Body of pancreas (tissue), 4 donors: ENCODE measurements at regions of chr14 and their contacts with region 1.

Region 1: DNA sequence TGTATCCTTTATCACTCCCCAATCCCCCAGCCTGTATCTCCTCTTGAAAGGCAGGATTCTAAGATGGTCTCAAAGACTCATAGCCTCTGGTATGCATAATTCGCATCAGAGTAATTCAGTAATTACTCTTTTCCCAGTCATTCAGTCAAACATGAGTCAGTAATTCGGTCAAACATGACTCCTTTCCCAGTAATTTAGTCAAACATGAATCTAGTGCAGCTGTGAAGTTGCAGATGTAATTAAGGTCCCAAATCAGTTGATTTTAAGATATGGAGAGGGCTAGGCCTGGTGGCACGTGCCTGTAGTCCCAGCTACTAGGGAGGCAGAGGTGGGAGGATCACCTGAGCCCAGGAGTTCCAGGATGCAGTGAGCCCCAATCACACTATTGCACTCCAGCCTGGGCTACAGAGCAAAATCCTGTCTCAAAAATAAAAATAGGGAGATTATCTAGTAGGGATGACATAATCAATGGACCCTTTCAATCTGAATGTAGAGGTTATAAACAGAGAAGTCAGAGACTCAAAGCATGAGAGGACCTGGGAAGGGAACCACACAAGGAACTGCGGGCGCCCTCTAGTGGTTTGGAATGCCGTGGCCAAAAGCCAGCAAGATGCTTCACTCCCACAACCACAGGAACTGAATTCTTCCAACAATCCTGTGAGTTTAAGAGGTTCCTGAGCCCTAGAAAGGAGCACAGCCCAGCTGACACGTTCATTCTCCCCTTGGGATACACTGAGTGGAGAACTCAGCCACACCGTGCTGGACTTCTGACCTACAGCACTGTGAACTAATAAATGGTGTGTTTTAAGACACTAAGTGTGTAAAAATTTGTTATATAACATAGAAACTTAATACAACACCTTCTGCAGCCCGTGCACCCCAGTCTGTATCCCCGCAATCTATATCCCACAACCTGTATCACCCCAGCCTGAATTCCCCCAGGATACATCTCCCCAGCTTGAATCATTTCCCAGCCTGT is 14.3 kb upstream of the ARMH4 start:
- DNase-seq: peak; percentile 82 to 90 (median 84)
- ATAC-seq: peak; percentile 75
- H3K4me3 ChIP-seq: no peak overlapping the region
- H3K27ac ChIP-seq: no peak overlapping the region
- H3K4me1 ChIP-seq: peaks cover 3% of the 10 kb centered on the region
- H3K27me3 ChIP-seq: no peaks in the 10 kb centered on the region
- CTCF ChIP-seq: peak; percentile 56 to 84 (median 69)
- POLR2A ChIP-seq: no peak

Region 2: GRCh38 chr14:58107947-58108552 is 58.2 kb before region 1 on chr14:
- intact Hi-C with region 1: loop called (anchors 10 kb)
- DNase-seq: peak; percentile 25 to 62 (median 48)
- ATAC-seq: no peak
- H3K4me3 ChIP-seq: no peak overlapping the region
- H3K27ac ChIP-seq: no peak overlapping the region
- H3K4me1 ChIP-seq: no peaks in the 10 kb centered on the region
- H3K27me3 ChIP-seq: no peaks in the 10 kb centered on the region
- CTCF ChIP-seq: peak; percentile 62 to 80 (median 76)
- POLR2A ChIP-seq: no peak